ENCODE measurements at regions of chr14 and their contacts with region 1.

Region 1: DNA sequence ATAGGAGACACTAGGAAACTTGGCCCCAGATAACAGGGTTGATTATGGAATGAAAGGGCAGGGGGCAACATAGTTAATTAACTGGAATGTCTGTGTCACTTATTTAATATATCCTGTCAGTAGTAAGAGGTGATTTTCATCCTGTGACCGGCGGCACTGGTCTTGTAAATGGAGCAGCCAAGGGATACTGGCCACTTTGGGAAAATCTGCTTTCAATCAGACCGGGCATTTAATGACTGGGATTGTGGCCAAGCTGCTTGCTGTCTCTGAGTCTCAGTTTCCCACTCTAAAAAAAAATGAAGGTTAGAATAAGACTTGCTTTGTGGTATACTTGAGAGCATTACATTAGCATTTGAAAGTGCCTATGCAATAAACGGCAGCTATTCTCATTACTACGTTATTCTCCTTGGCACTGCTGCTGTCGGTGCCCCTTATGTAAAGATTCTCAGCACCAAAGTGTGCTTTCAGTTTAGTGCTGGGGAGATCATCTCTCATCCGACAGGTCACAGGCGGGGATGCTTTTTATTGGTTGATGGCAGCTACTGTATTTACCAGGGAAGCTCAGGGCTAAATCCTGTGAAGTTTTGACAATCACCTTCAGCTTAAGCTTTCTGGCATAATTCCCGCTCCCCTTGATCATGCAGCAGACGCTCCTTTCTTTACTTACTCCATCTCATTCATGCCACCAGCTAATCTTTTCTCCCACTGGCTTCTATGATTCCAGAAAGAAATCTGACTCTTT is 162.1 kb downstream of the ESRRB start:
- DNase-seq: no peak
- H3K4me3 Mint-ChIP-seq: no peak overlapping the region
- H3K27ac Mint-ChIP-seq: no peak overlapping the region
- H3K4me1 Mint-ChIP-seq: peaks cover 5% of the 10 kb centered on the region
- H3K27me3 Mint-ChIP-seq: peaks cover 11% of the 10 kb centered on the region
- CTCF ChIP-seq: no peak

Region 2: DNA sequence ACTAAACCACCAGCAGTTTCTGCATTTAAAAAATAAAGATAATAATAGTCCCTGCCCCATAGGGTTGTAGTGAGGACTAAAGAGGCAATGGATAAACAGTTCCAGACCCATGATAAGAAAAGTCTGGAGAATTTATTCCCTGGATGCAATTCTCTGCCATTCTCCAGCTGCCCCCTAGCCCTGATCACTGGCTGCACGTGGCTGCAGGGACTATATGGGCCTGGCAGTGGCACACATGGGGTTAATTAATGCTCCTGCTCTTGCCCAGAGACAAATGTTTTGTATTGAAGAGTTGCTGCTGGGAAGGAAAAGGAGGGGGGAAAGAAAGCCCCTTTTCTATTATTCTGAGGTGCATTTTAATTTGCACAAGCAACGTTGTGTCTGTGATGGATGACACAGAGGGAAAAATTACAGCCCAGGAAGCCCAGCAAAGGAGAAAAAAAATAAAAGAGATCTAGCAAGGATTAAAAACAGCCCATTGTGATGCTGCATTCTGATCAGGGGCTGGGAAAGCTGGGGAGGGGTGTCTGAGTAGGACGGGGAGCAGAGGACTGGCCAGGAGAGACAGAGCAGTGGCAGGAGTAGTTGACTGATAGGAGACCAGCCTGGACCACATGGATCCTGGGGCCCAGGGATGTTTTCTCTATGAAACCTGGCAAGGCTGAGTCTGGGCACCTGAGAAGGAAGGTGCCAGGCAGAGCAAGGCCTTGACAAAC is 12.8 kb before region 1 on chr14:
- CTCF ChIA-PET with region 1: interaction called, 10 read pairs
- POLR2A ChIA-PET with region 1: no interaction called
- intact Hi-C with region 1: no loop called
- DNase-seq: no peak
- H3K4me3 Mint-ChIP-seq: no peak overlapping the region
- H3K27ac Mint-ChIP-seq: no peak overlapping the region
- H3K4me1 Mint-ChIP-seq: no peaks in the 10 kb centered on the region
- H3K27me3 Mint-ChIP-seq: no peaks in the 10 kb centered on the region
- CTCF ChIP-seq: no peak

Region 3: DNA sequence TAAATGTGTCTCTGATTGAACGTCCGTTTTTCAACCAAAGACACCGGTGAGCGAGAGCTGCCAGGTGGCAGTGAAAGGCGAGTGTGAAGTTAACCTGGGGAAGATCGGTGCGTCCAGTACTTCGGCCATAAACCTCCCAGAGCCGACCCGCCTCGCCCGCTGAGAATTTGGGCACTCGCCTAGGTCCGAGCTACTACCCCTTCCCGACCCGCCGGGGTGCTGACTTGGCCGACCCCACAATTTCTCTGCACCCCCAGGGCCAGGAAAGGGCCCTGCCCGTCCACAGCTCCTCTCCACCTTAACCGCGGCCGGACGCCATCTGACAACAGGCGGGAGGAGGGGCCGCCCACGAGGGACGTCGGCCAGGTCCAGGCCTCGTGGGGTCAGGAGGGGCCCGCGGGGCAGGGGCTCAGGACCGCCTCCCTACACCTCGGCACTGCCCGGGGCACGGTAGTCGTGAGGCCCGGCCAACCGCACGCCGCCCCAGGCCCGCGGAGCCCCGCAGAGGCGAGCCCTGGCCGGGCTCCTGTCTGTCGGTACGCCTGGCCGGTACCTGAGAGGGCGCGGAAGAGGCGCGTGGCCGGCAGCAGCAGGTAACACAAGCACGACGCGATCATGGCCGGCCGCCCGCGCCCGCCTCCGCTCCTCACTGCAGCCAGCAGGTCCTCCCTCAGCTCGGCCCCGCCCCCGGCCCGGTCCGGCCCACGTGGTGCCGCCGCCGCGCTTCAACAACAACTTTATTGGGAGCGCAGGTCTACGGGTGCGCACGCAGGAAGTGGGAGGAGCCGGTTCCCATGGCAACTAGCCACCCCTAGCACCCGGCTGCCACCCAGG is 274.4 kb after region 1 on chr14 and contains the start of gene ANGEL1:
- CTCF ChIA-PET with region 1: no interaction called
- POLR2A ChIA-PET with region 1: no interaction called
- intact Hi-C with region 1: no loop called
- DNase-seq: peak; percentile 96
- H3K4me3 Mint-ChIP-seq: peak within 1 kb of the TSS; percentile 97
- H3K27ac Mint-ChIP-seq: peak within 1 kb of the TSS; percentile 91
- H3K4me1 Mint-ChIP-seq: peaks cover 14% of the 10 kb centered on the region
- H3K27me3 Mint-ChIP-seq: no peaks in the 10 kb centered on the region
- CTCF ChIP-seq: no peak
- total RNA-seq, gene ANGEL1: 14.5 and 21.3 TPM in 2 replicates

Measured in MCF 10A (cell line).